ENCODE measurements at regions of chr16 and their contacts with region 1.

Region 1: DNA sequence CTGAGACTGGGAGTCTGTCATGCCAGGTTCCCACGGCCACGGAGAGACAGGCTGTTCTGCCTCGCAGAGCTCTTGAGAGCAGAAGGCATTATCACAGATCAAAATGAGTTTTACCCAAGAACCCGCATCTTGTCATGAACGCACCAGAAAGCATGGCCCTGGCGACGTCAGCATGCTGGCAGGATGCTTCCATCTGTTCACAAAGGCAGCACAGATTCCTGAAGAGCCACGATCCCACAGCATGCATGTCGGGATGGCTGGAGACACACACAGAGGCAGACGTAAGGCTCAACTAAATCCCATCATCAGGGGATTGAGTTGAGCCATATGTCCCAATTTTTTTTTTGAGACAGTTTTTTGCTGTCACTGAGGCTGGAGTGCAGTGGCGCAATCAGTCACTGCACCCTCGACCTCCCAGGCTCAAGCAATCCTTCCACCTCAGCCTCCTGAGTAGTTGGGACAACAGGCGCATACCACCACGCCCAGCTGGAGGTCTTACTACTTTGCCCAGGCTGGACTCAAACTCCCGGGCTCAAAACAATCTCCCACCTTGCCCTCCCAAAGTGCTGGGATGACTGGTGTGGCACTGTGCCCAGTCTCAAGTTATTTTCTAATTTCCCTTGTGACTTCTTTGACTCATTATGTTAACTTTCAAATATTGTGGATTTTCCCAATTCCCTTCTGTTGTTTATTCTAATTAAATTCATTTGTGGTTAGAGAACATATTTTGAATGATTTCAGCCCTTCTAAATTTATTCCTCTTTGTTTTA is 11.1 kb downstream of the FANCA start:
- DNase-seq: no peak
- H3K4me3 Mint-ChIP-seq: no peak overlapping the region
- H3K27ac Mint-ChIP-seq: no peak overlapping the region
- H3K4me1 Mint-ChIP-seq: no peaks in the 10 kb centered on the region
- H3K27me3 Mint-ChIP-seq: no peaks in the 10 kb centered on the region

Region 2: DNA sequence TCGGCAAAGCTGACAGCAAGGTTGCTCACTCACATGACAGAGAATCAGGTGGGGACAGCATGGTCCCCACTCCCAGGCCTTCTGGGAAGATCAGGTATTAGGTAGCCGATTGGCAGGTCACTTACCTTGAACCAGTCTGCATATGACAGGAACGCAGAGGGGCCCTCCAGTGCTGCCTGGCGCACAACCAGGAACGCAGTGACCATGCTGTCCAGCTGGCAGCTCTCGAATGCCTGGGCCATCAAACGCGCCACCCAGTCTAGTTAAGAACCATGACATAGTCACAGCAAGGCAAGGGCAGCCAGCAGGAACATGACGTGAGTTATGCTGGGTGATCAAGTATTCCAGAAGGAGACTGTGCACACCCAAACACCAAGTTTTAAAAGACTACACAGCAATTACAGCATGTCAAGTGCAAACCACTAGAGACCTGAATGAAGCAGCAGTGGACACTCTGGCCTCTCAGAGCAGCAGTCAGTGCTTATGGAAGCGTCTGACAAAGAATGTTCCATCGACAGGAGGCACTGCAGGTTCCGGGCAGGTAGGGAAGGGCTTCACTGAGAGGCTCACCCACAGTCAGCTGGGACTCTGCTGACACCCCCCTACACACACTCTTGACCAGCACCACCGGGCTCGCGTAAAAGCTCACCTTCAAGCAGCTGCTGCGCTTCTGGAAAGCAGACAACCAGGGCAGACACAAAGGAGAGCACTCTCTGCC is 13.9 kb before region 1 on chr16:
- CTCF ChIA-PET with region 1: interaction called, 10 read pairs
- POLR2A ChIA-PET with region 1: no interaction called
- intact Hi-C with region 1: no loop called
- DNase-seq: no peak
- H3K4me3 Mint-ChIP-seq: no peak overlapping the region
- H3K27ac Mint-ChIP-seq: no peak overlapping the region
- H3K4me1 Mint-ChIP-seq: peaks cover 6% of the 10 kb centered on the region
- H3K27me3 Mint-ChIP-seq: no peaks in the 10 kb centered on the region

Region 3: DNA sequence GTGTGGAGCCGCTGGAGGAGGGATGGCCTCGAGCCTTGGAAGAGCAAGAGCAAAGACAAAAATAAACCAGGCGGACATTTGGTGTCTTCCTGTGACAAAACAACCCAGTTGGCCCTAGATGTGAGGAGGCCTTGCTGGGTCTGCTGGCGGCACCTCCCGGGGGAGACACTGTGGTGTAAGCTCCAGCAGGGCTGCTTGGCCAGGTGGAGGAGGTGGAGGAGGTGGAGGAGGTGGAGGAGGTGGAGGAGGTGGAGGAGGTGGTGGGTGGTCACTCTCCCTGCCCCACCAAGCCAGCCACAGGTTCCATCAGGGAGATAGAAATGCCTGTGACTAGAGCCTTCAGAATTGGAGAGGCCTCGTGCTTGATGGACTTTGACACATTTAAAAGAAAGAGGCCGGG is 181.8 kb after region 1 on chr16:
- CTCF ChIA-PET with region 1: no interaction called
- POLR2A ChIA-PET with region 1: no interaction called
- intact Hi-C with region 1: no loop called
- DNase-seq: no peak
- H3K4me3 Mint-ChIP-seq: no peak overlapping the region
- H3K27ac Mint-ChIP-seq: no peak overlapping the region
- H3K4me1 Mint-ChIP-seq: peaks cover 16% of the 10 kb centered on the region
- H3K27me3 Mint-ChIP-seq: no peaks in the 10 kb centered on the region

Measured in activated CD4-positive, alpha-beta memory T cell treated with anti-CD3 and anti-CD28 coated beads for 36 hours (primary cell).